Naive thymus-derived CD4-positive, alpha-beta T cell (primary cell): ENCODE measurements at regions of chr10 and their contacts with region 1.

Region 1: DNA sequence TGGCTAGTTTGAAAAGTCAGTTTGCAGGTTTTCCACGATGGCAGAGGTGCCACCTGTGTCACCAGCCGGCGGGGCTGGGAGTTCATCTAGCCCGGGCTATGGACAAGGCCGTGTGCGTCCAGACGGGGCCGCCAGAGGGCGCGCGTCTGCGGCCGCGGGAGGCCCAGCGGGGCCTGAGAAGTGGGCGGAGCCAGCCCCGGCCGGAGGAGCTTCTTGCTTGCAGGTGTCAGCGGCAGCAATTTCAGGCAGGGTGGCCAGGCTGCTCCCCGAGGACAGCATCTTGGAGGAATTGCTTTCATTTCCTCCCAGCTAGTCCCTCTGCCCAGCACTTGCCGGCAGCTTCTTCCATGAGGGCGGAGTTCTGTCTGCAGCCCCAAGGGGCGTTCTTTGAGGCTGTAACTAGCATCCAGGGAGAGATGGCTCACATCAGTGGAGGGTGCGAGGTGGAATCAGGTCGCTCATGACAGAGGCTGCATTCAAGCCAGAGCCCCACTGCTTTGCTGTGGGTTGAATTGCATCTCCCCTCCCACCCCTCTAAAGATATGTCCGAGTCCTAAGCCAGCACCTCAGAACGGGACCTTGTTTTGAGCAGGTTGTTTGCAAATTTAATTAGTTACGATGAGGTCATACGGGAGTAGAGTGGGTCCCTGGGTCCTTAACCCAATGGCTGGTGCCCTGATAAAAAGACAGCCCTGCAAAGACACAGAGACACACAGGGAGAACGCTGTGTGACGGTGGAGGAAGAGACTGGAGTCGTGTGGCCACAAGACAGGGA is 85.9 kb upstream of the MKI67 start:
- DNase-seq: peak; percentile 66 to 91 (median 80)
- ATAC-seq: peak; percentile 87
- H3K4me3 ChIP-seq: peak overlapping the region; percentile 44
- H3K4me3 Mint-ChIP-seq: peak overlapping the region; percentile 75 to 91 (median 86)
- H3K27ac ChIP-seq: no peak overlapping the region
- H3K27ac Mint-ChIP-seq: peak overlapping the region; percentile 83 to 94 (median 88)
- H3K4me1 ChIP-seq: peaks cover 4 to 8% of the 10 kb centered on the region in 2 donors
- H3K4me1 Mint-ChIP-seq: peaks cover 10 to 25% (median 17%) of the 10 kb centered on the region in 7 donors
- H3K27me3 ChIP-seq: no peaks in the 10 kb centered on the region
- H3K27me3 Mint-ChIP-seq: peaks cover 0 to 21% (median 0%) of the 10 kb centered on the region in 5 donors

Region 2: GRCh38 chr10:127906548-127907377 is 305.4 kb before region 1 on chr10 and contains the start of gene PTPRE:
- CTCF ChIA-PET with region 1: no interaction called
- POLR2A ChIA-PET with region 1: no interaction called
- intact Hi-C with region 1: loop called in 1 of 2 experiments (anchors 5 kb)
- DNase-seq: peak; percentile 18 to 82 (median 65)
- ATAC-seq: peak; percentile 95
- H3K4me3 ChIP-seq: peak within 1 kb of the TSS; percentile 39
- H3K4me3 Mint-ChIP-seq: peak within 1 kb of the TSS; percentile 8 to 61 (median 38)
- H3K27ac ChIP-seq: no peak within 1 kb of the TSS
- H3K27ac Mint-ChIP-seq: no peak within 1 kb of the TSS
- H3K4me1 ChIP-seq: no peaks in the 10 kb centered on the region
- H3K4me1 Mint-ChIP-seq: peaks cover 0 to 8% (median 0%) of the 10 kb centered on the region in 7 donors
- H3K27me3 ChIP-seq: no peaks in the 10 kb centered on the region
- H3K27me3 Mint-ChIP-seq: peaks cover 20 to 44% (median 24%) of the 10 kb centered on the region in 5 donors
- total RNA-seq, gene PTPRE: 25.4 to 237 (median 29.1) TPM

Region 3: DNA sequence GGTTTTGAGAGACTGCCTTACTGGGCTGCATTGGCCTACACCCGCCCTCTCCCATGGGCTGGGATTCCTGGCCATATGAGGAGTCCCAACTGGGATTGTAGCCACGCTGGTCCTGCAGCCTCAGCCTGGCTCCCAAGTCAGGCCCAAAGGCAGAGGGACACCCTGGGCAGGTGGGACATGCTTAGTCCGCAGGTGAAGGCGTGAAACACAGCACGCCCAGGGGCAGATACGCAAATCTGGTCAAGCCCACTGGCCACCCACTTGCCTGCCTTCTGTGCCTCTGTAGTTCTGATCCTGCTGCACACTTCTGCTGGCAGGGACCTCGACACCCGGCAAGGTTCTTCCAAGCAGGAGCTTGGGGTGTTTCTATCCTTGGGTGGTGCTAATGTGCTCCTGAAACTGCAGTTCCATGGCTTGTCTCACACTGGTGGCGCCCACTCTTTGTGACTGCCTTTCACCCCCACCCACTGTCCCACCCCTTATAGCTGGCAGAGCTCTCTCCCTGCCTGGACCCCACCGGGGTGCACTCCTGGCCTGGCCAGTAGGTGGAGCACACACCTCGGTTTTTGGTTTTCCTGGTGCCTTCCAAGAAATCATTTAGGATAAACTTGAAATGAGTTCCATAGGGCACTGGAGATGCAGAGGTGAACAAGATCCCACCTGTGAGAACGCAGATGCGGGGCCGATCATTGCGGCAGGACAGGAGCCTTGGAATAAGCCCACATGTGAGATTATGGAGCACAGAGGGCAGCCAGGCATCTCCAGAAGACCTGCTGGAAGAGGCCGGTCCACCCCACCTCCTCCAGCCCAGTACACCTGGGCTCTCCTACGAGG is 133.8 kb before region 1 on chr10:
- CTCF ChIA-PET with region 1: interaction called, 3 read pairs
- POLR2A ChIA-PET with region 1: no interaction called
- intact Hi-C with region 1: loop called in 1 of 2 experiments (anchors 5 kb)
- DNase-seq: peak in 5 of 9 donors; percentile 13 to 48 (median 33)
- ATAC-seq: peak; percentile 70
- H3K4me3 ChIP-seq: no peak overlapping the region
- H3K4me3 Mint-ChIP-seq: no peak overlapping the region
- H3K27ac ChIP-seq: no peak overlapping the region
- H3K27ac Mint-ChIP-seq: no peak overlapping the region
- H3K4me1 ChIP-seq: no peaks in the 10 kb centered on the region
- H3K4me1 Mint-ChIP-seq: peaks cover 0 to 8% (median 0%) of the 10 kb centered on the region in 7 donors
- H3K27me3 ChIP-seq: no peaks in the 10 kb centered on the region
- H3K27me3 Mint-ChIP-seq: no peaks in the 10 kb centered on the region

Region 4: GRCh38 chr10:128178319-128178958 is 33.7 kb before region 1 on chr10:
- CTCF ChIA-PET with region 1: interaction called, 25 read pairs
- POLR2A ChIA-PET with region 1: interaction called, 8 read pairs
- intact Hi-C with region 1: loop called (anchors 1 kb)
- DNase-seq: peak in 7 of 9 donors; percentile 16 to 56 (median 34)
- ATAC-seq: peak; percentile 80
- H3K4me3 ChIP-seq: no peak overlapping the region
- H3K4me3 Mint-ChIP-seq: no peak overlapping the region
- H3K27ac ChIP-seq: no peak overlapping the region
- H3K27ac Mint-ChIP-seq: peak overlapping the region in 2 of 9 donors; percentile 72 to 83
- H3K4me1 ChIP-seq: peaks cover 0 to 14% of the 10 kb centered on the region in 2 donors
- H3K4me1 Mint-ChIP-seq: peaks cover 14 to 40% (median 25%) of the 10 kb centered on the region in 7 donors
- H3K27me3 ChIP-seq: no peaks in the 10 kb centered on the region
- H3K27me3 Mint-ChIP-seq: peaks cover 0 to 12% (median 0%) of the 10 kb centered on the region in 5 donors

Region 5: GRCh38 chr10:129466703-129467358 is 1254.7 kb after region 1 on chr10 and contains the start of gene MGMT:
- CTCF ChIA-PET with region 1: no interaction called
- POLR2A ChIA-PET with region 1: no interaction called
- intact Hi-C with region 1: loop called in 1 of 2 experiments (anchors 1 kb)
- DNase-seq: peak; percentile 91 to 98 (median 96)
- ATAC-seq: peak; percentile 99
- H3K4me3 ChIP-seq: peak within 1 kb of the TSS; percentile 74
- H3K4me3 Mint-ChIP-seq: peak within 1 kb of the TSS; percentile 74 to 90 (median 87)
- H3K27ac ChIP-seq: peak within 1 kb of the TSS; percentile 85
- H3K27ac Mint-ChIP-seq: peak within 1 kb of the TSS; percentile 71 to 91 (median 84)
- H3K4me1 ChIP-seq: peaks cover 11 to 13% of the 10 kb centered on the region in 2 donors
- H3K4me1 Mint-ChIP-seq: peaks cover 8 to 31% (median 26%) of the 10 kb centered on the region in 7 donors
- H3K27me3 ChIP-seq: no peaks in the 10 kb centered on the region
- H3K27me3 Mint-ChIP-seq: no peaks in the 10 kb centered on the region
- total RNA-seq, gene MGMT: 17.6 to 23.9 (median 21.8) TPM

Region 6: GRCh38 chr10:130179640-130180039 is 1967.5 kb after region 1 on chr10:
- CTCF ChIA-PET with region 1: no interaction called
- POLR2A ChIA-PET with region 1: no interaction called
- intact Hi-C with region 1: loop called in 1 of 2 experiments (anchors 2 kb)
- DNase-seq: peak in 7 of 9 donors; percentile 39 to 70 (median 63)
- ATAC-seq: peak; percentile 82
- H3K4me3 ChIP-seq: no peak overlapping the region
- H3K4me3 Mint-ChIP-seq: no peak overlapping the region
- H3K27ac ChIP-seq: no peak overlapping the region
- H3K27ac Mint-ChIP-seq: peak overlapping the region in 3 of 9 donors; percentile 20 to 71 (median 66)
- H3K4me1 ChIP-seq: no peaks in the 10 kb centered on the region
- H3K4me1 Mint-ChIP-seq: peaks cover 0 to 20% (median 14%) of the 10 kb centered on the region in 7 donors
- H3K27me3 ChIP-seq: no peaks in the 10 kb centered on the region
- H3K27me3 Mint-ChIP-seq: no peaks in the 10 kb centered on the region